ENCODE measurements at regions of chr19 and their contacts with region 1.

Region 1: DNA sequence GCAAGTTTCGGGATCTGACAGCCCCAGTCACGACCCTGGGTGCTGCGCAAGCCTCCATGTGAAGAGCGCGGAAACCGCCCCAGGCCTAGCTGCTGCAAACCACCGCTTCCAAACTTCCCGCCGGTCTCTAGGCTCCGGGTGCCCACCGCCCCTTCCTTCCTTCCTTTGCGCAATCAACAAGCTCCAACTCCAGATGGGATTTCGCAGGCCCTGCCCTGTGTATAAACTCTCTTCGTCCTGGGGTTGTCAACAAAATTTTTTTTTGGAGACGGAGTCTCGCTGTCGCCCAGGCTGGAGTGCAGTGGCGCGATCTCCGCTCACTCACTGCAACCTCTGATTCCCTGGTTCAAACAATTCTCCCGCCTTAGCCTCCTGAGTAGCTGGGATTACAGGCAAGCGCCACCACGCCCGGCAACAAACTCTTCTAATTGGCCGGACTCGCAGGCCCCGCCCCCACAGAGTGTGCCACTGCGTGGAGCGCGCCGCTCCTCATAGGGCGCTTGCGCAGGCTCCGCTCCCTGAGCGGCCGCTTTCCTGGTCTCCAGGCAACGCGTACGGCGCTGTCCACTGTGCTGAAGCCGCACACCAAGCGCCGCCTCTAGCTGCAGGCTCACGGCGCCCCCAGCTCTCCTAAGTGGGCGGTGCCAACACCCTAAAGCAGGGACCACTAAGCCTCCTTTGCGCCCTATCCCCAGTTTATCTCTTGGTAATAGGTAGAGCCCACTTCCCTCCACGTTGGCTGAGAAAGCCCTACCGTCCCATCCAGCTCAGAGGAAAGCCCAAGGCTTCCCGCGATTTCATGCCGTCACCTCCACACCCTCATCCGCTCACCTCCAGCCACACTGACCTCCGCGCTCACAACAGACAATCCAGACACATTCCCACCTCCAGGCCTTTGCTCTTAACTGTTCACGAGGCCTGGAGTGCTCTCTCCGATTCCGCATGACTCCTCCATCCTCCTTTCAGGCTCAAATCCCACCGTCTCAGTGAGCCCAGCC is 5.5 kb upstream of the QTRT1 start:
- DNase-seq: peak; percentile 92
- H3K4me3 Mint-ChIP-seq: peak overlapping the region; percentile 68
- H3K27ac Mint-ChIP-seq: no peak overlapping the region
- H3K4me1 Mint-ChIP-seq: peaks cover 17% of the 10 kb centered on the region
- H3K27me3 Mint-ChIP-seq: peaks cover 8% of the 10 kb centered on the region

Region 2: DNA sequence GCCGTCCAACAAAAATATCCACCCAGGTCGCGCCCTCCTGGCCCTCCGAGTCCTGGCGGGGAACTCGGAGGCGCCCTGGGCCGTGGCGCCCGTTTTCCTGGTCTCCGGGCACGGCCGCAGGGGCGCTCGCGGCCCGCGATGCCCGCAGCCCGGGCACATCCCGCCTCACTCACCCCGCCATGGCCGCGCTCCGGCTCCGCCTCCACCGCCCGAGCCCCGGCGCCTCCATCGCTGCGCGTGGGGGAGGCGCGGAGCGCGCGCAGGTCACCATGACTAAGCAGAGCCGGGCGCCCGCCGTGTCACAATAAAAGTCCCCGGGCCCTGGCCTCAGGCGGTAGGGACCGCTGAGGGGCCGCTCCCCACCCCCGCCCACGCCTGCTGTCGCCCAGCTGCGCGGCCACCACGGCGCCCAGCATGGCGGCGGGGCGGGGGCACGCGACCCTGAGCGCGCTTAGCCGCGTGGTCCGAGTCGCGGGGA is 193.1 kb before region 1 on chr19:
- CTCF ChIA-PET with region 1: interaction called, 15 read pairs
- intact Hi-C with region 1: loop called (anchors 2 kb)
- DNase-seq: peak; percentile 93
- H3K4me3 Mint-ChIP-seq: peak overlapping the region; percentile 89
- H3K27ac Mint-ChIP-seq: peak overlapping the region; percentile 88
- H3K4me1 Mint-ChIP-seq: peaks cover 37% of the 10 kb centered on the region
- H3K27me3 Mint-ChIP-seq: no peaks in the 10 kb centered on the region

Region 3: DNA sequence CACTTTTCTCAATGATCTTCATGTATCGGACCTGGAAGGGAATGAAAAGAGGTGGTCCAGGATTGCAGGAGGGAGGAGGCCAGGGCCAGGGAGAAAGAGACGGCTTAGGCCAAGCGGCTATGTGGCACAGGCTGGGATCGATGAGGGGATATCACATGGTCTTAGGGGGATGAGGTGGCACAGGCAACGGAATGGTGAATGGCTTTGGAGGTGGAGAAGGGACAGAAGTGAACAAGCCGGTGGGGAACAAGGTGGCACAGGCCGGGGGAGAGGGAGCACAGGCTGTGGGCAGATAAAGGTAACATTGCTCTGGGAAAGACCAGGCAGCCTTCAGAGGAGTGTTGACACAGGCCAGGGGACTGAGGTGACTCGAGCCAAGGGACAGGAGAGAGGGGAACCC is 121.2 kb before region 1 on chr19:
- CTCF ChIA-PET with region 1: interaction called, 147 read pairs
- intact Hi-C with region 1: loop called (anchors 5 kb)
- DNase-seq: no peak
- H3K4me3 Mint-ChIP-seq: no peak overlapping the region
- H3K27ac Mint-ChIP-seq: no peak overlapping the region
- H3K4me1 Mint-ChIP-seq: peaks cover 14% of the 10 kb centered on the region
- H3K27me3 Mint-ChIP-seq: no peaks in the 10 kb centered on the region

Region 4: DNA sequence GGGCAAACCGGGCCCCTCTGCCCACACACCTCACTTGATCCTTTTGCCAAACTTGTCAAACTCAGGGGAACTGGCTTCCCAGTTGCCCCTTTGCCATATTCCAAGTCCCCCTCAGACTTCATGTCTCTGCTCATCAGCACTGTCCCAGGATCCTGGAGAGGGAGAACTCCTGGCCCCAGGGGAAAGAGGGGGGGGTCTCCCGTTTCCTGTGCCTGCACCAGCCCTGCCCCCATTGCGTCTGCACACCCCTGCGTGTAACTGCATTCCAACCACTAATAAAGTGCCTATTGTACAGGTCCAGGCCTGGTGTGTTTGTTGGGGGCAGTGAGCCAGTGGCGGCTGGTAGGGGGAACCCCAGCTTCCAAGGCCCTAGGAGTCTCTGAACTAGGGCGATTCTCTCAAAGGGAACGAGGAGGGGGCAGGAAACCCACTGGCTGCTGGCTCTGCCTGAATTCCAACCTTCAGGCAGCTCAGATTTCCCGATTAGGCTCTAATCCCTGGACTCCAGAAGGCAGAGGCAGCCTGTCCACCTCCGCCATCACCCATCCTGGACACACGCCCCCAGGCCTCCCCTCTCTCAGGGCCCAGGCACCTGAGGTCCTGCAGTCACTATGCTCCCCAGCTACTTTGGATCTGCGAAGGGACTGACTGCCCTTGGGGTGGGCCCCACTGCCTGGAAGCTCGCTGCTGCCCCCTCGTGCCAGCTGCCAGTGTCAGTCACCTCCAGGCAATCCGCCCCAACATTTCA is 51.3 kb before region 1 on chr19:
- CTCF ChIA-PET with region 1: interaction called, 78 read pairs
- intact Hi-C with region 1: loop called (anchors 2 kb)
- DNase-seq: peak; percentile 90
- H3K4me3 Mint-ChIP-seq: no peak overlapping the region
- H3K27ac Mint-ChIP-seq: no peak overlapping the region
- H3K4me1 Mint-ChIP-seq: peaks cover 16% of the 10 kb centered on the region
- H3K27me3 Mint-ChIP-seq: no peaks in the 10 kb centered on the region